Transverse colon (tissue), 4 donors: ENCODE measurements at regions of chr1 and their contacts with region 1.

Region 1: GRCh38 chr1:12619792-12620487 is 1.9 kb upstream of the DHRS3 start:
- DNase-seq: peak; percentile 91
- H3K4me3 ChIP-seq: peak overlapping the region in 3 of 4 donors; percentile 54 to 85 (median 70)
- H3K27ac ChIP-seq: peak overlapping the region; percentile 92 to 96 (median 94)
- H3K4me1 ChIP-seq: peaks cover 21 to 50% (median 42%) of the 10 kb centered on the region in 4 donors
- H3K27me3 ChIP-seq: no peaks in the 10 kb centered on the region
- CTCF ChIP-seq: peak; percentile 95 to 99 (median 97)
- EP300 ChIP-seq: no peak
- POLR2A ChIP-seq: no peak

Region 2: DNA sequence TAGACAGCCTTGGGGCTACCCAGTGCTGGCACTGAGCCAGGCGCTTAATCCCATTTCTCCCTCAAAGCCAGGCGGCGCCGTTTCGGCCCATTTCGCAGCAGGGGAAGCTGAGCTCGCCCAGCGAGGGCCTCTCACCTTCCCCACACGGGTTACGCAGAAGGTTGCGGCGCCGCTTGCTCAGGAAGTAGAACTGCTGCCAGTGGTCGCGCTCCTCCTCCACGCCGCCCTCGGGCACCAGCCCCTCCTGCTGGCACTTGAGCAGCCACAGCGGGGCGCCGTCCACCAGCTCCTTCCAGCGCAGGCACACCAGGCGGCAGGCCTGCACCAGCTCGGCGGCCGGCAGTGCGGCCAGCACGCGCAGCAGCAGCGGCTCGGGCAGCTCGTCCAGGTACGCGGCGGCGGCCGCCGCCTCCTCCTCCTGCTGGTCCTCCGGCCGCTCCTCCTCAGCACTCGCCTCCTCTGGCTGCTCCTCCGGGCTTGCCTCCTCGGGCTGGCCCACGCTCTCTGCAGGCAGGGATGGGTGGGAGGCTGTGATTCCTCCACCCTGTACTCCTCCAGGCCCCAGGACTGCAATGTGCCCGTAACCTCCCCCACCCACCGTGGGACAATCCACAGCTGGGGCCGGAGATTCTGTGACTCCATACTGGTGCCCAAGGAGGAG is 969.5 kb before region 1 on chr1:
- in situ Hi-C with region 1: no loop called
- intact Hi-C with region 1: no loop called
- DNase-seq: peak; percentile 84
- H3K4me3 ChIP-seq: peak overlapping the region in 1 of 4 donors; percentile 27
- H3K27ac ChIP-seq: no peak overlapping the region
- H3K4me1 ChIP-seq: peaks cover 17 to 43% (median 34%) of the 10 kb centered on the region in 4 donors
- H3K27me3 ChIP-seq: peaks cover 55% of the 10 kb centered on the region
- CTCF ChIP-seq: peak; percentile 46 to 79 (median 58)
- EP300 ChIP-seq: no peak
- POLR2A ChIP-seq: no peak

Region 3: DNA sequence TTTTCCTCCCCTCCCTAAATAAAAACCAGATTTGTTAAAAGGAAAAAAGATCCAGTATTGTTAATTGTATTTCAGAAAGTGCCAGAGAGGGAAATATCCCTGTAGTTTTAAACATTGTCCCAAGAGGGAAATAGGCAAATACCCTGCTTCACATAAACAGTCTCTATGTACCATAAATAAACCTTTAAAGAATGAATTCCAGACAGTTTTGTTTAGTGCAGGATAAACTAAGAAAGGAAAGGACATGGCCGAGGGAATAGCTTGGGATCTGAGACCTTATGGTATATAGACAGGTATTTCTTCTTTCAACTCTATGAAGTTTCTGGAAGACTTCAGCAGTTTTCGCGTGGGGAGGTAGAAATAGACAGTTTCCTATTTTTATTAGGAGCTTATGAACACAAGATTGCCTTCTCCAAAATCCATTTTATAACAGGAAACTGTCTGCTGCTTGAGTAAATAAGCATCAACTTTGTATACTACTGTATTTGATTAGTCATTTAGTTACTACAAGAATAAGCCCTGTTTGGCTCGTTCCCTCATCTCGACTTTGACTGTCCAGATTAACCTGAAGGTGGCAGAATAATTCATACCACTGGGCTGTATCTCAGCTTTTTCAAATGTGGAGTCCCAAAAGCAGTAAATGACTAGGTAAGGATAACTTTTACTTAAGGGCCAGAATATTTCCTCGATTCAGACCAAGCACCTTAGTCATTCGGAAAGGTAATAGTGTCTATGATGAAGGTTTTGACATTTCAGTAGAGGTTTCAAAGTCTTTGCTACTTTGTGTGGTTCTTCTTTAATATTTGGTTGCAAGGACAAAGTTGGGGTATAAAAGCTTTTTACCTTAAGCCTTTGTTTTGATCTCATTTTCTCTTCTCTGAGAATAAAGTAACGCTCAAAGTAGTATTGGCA is 212.6 kb before region 1 on chr1:
- in situ Hi-C with region 1: loop called in 1 of 4 experiments (anchors 25 kb)
- intact Hi-C with region 1: loop called (anchors 2 kb)
- DNase-seq: no peak
- H3K4me3 ChIP-seq: no peak overlapping the region
- H3K27ac ChIP-seq: peak overlapping the region; percentile 42 to 65 (median 54)
- H3K4me1 ChIP-seq: peaks cover 25 to 61% (median 49%) of the 10 kb centered on the region in 4 donors
- H3K27me3 ChIP-seq: no peaks in the 10 kb centered on the region
- CTCF ChIP-seq: peak; percentile 28 to 45 (median 34)
- EP300 ChIP-seq: no peak
- POLR2A ChIP-seq: no peak

Region 4: DNA sequence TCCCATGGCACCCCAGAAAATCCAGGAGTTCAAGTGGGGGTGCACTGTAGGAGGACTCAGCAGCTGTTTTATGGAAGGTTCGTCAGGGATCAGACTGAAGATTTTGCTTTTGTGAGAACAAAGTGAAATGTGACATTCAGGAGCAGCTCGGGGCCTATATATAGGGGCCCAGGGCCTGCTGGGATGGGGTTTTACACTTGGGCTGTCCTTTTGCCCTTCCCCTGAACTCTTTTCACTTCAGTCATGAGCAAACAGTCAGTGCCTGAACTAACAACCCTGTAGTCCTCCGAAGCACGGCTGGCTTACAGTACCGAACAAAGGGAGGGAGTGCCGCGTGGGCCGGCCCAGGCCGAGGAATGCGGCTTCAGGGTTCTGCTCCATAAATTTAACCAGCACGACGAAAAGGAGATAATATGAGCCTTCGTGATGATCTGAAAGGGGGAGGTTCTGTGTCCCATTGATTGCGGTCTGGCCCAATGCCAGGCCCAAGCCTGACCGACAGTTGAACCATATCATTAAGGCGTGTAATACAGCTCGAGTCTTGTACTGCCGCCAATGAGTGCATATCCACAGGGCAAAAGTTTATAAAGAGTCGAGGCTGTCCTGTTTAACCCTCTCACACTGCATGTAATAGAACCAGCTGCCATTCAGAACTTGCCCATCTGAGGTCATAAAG is 141.9 kb before region 1 on chr1:
- in situ Hi-C with region 1: no loop called
- intact Hi-C with region 1: loop called (anchors 10 kb)
- DNase-seq: peak; percentile 90
- H3K4me3 ChIP-seq: peak overlapping the region in 1 of 4 donors; percentile 3
- H3K27ac ChIP-seq: peak overlapping the region; percentile 85 to 90 (median 88)
- H3K4me1 ChIP-seq: peaks cover 76 to 90% (median 80%) of the 10 kb centered on the region in 4 donors
- H3K27me3 ChIP-seq: no peaks in the 10 kb centered on the region
- CTCF ChIP-seq: no peak
- EP300 ChIP-seq: no peak
- POLR2A ChIP-seq: no peak

Region 5: GRCh38 chr1:12594966-12595756 is 24.8 kb before region 1 on chr1:
- in situ Hi-C with region 1: no loop called
- intact Hi-C with region 1: loop called (anchors 2 kb)
- DNase-seq: peak; percentile 50
- H3K4me3 ChIP-seq: peak overlapping the region in 3 of 4 donors; percentile 8 to 43 (median 31)
- H3K27ac ChIP-seq: peak overlapping the region; percentile 74 to 91 (median 90)
- H3K4me1 ChIP-seq: peaks cover 34 to 76% (median 52%) of the 10 kb centered on the region in 4 donors
- H3K27me3 ChIP-seq: no peaks in the 10 kb centered on the region
- CTCF ChIP-seq: no peak
- EP300 ChIP-seq: no peak
- POLR2A ChIP-seq: no peak